ENCODE measurements at regions of chr1 and their contacts with region 1.

Region 1: DNA sequence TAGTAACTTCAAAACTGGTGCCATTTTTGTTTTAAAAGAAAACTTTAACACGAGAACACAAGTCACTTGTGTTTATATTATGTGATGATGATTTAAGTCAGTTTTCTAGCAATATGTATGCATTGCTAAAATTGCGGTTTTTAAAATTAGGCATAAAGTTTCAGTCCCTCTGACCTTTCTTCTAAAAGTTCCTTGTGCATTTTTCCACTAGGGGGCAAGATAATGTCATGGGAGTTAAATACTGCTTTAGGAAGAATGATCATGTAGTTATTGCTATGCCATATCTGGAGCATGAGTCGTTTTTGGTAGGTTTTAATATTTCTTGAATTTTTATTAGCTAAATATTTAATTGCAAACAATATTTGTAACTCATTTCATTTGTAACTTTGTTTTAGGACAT is 10.7 kb downstream of the CDC7 start:
- DNase-seq: no peak
- H3K4me3 ChIP-seq: no peak overlapping the region
- H3K27ac ChIP-seq: no peak overlapping the region
- H3K4me1 ChIP-seq: peaks cover 0 to 21% (median 0%) of the 10 kb centered on the region in 4 donors
- H3K27me3 ChIP-seq: no peaks in the 10 kb centered on the region
- CTCF ChIP-seq: peak; percentile 48 to 70 (median 60)
- EP300 ChIP-seq: no peak
- POLR2A ChIP-seq: no peak

Region 2: GRCh38 chr1:91622616-91623015 is 111.2 kb after region 1 on chr1:
- intact Hi-C with region 1: loop called (anchors 10 kb)
- DNase-seq: peak; percentile 96
- H3K4me3 ChIP-seq: no peak overlapping the region
- H3K27ac ChIP-seq: peak overlapping the region in 3 of 4 donors; percentile 54 to 74 (median 69)
- H3K4me1 ChIP-seq: peaks cover 0 to 24% (median 19%) of the 10 kb centered on the region in 4 donors
- H3K27me3 ChIP-seq: no peaks in the 10 kb centered on the region
- CTCF ChIP-seq: no peak
- EP300 ChIP-seq: peak in 2 of 4 donors; percentile 38 to 82
- POLR2A ChIP-seq: no peak

Region 3: DNA sequence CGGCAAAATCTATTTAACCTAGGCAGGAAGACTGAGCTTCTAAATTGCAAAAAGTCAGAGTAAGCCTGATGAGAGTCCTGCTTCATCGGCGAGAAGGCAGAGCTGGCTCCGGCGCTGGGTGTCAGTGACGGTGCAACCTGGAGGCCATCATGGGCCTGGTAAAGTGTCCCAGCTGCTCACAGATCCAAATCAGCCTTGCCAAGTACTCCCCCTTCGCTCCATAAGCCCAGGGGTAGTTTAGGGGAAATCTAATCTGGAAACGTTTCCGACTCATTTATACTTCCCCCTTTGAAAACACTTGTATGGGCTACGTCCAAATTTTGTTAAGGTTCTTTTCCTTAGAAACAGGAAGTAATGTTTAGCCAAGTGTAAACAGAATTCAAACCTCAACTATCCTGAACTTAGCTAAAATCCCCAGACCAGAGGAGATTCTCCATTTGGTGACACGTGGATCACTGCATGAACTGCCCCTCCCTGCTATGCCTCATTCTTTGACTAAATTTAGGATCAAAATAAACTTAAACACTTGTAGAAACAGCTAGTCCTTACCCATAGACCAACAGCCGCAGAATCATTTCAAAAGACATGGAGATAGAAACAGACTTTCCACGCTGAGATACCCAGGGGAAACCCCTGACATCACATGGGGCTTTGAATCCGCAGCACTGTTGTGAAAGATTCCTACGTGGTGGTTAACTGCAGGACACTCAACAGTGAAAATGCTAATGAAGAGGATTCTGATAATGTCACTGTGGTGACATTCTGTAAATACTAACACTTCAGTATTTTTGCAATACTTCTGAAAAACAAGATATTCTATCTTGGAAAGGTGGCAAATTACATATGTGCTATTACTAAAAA is 201.8 kb after region 1 on chr1:
- intact Hi-C with region 1: loop called (anchors 10 kb)
- DNase-seq: peak; percentile 89
- H3K4me3 ChIP-seq: no peak overlapping the region
- H3K27ac ChIP-seq: peak overlapping the region; percentile 80 to 89 (median 85)
- H3K4me1 ChIP-seq: peaks cover 3 to 44% (median 41%) of the 10 kb centered on the region in 4 donors
- H3K27me3 ChIP-seq: no peaks in the 10 kb centered on the region
- CTCF ChIP-seq: no peak
- EP300 ChIP-seq: peak in 1 of 4 donors; percentile 60
- POLR2A ChIP-seq: no peak

Region 4: GRCh38 chr1:91929250-91929649 is 417.9 kb after region 1 on chr1:
- intact Hi-C with region 1: loop called (anchors 1 kb)
- DNase-seq: no peak
- H3K4me3 ChIP-seq: no peak overlapping the region
- H3K27ac ChIP-seq: no peak overlapping the region
- H3K4me1 ChIP-seq: no peaks in the 10 kb centered on the region
- H3K27me3 ChIP-seq: no peaks in the 10 kb centered on the region
- CTCF ChIP-seq: no peak
- EP300 ChIP-seq: no peak
- POLR2A ChIP-seq: no peak